Activated CD4-positive, alpha-beta T cell treated with anti-CD3 and anti-CD28 coated beads, Interleukin-2, amount 10 ng/mL, durations not matched to agents 7 days and 5 days (primary cell): ENCODE measurements at regions of chr16 and their contacts with region 1.

Region 1: GRCh38 chr16:71883849-71884638 is at the start of gene ZNF821:
- DNase-seq: peak; percentile 69
- H3K4me3 Mint-ChIP-seq: peak within 1 kb of the TSS; percentile 96
- H3K27ac Mint-ChIP-seq: peak within 1 kb of the TSS; percentile 95
- H3K4me1 Mint-ChIP-seq: peaks cover 51% of the 10 kb centered on the region
- H3K27me3 Mint-ChIP-seq: peaks cover 15% of the 10 kb centered on the region
- total RNA-seq, gene ZNF821: 7.1 to 7.7 TPM

Region 2: GRCh38 chr16:71855937-71856662 is 27.9 kb before region 1 on chr16:
- CTCF ChIA-PET with region 1: interaction called, 23 read pairs
- POLR2A ChIA-PET with region 1: no interaction called
- DNase-seq: no peak
- H3K4me3 Mint-ChIP-seq: no peak overlapping the region
- H3K27ac Mint-ChIP-seq: no peak overlapping the region
- H3K4me1 Mint-ChIP-seq: peaks cover 44% of the 10 kb centered on the region
- H3K27me3 Mint-ChIP-seq: no peaks in the 10 kb centered on the region

Region 3: DNA sequence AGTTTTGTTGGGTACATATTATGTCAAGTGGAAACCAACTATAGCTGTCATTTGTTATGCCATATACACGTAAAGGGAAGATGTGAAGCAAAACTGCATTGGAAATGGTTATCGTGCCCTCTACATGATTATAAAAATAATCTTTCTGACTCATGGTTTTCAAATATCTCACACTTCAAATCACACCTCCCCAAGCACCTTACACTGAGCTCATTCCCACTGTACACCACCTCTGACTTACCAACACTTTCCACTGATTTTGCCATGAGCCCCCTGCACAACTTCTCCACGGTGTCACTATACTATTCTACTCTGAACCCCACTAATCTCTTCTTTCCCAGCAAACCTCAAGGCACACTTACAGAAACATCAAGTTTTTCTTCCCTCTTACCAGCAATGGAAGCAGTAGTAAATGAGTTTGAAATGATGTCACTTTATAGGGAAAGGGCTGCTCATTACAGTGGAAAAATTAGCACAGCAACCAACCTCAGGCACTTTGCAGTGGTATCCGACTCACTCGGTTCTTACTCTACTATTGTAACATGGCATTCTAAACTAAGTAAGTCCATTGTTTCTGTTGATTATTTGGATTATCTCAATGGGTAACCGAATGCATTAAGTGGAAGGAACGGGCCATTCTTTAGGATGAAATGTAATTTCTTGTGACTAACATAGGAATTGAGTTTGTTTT is 18.7 kb before region 1 on chr16:
- CTCF ChIA-PET with region 1: interaction called, 16 read pairs
- POLR2A ChIA-PET with region 1: no interaction called
- DNase-seq: no peak
- H3K4me3 Mint-ChIP-seq: no peak overlapping the region
- H3K27ac Mint-ChIP-seq: no peak overlapping the region
- H3K4me1 Mint-ChIP-seq: peaks cover 4% of the 10 kb centered on the region
- H3K27me3 Mint-ChIP-seq: no peaks in the 10 kb centered on the region

Region 4: DNA sequence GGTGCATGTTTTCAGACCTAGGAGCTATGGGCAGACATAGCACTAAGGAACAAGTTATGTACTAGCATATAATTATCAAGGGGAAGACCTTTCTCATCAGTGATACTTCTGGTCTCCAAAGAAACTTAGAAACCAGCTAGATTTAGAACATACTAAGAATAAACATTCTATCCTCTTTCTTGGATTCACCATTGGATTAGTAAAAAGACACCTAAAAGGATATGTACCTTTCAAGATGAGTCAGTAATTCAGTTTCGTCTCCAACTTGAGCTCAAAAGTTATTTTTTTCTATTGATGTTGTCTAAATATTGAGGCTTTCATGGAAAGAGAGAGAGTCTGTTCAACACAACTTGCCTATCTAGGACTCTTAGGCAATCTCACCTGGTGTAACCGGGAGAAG is 13.2 kb before region 1 on chr16:
- CTCF ChIA-PET with region 1: interaction called, 31 read pairs
- POLR2A ChIA-PET with region 1: no interaction called
- DNase-seq: no peak
- H3K4me3 Mint-ChIP-seq: no peak overlapping the region
- H3K27ac Mint-ChIP-seq: no peak overlapping the region
- H3K4me1 Mint-ChIP-seq: peaks cover 23% of the 10 kb centered on the region
- H3K27me3 Mint-ChIP-seq: no peaks in the 10 kb centered on the region

Region 5: GRCh38 chr16:71894921-71895678 is 11.1 kb after region 1 on chr16 and contains the start of gene IST1:
- CTCF ChIA-PET with region 1: interaction called, 55 read pairs
- POLR2A ChIA-PET with region 1: no interaction called
- DNase-seq: peak; percentile 98
- H3K4me3 Mint-ChIP-seq: peak within 1 kb of the TSS; percentile 93
- H3K27ac Mint-ChIP-seq: peak within 1 kb of the TSS; percentile 95
- H3K4me1 Mint-ChIP-seq: peaks cover 30% of the 10 kb centered on the region
- H3K27me3 Mint-ChIP-seq: no peaks in the 10 kb centered on the region
- total RNA-seq, gene IST1: 180 to 191 TPM

Region 6: DNA sequence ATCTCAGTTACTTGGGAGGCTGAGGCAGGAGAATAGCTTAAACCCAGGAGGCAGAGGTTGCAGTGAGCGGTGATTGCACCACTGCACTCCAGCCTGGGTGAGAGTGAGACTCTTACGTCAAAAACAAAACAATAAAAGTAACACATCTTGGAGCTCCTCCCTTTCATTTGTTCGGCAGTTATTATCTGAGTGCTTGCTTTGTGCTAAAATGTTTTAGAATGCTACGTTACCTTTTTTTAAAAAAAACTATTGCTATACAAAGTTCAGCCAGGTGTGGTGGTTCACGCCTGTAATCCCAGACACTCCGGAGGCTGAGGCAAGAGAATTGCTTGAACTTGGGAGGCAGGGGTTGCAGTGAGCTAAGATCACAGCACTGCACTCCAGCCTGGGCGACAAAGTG is 27.1 kb after region 1 on chr16:
- CTCF ChIA-PET with region 1: interaction called, 12 read pairs
- POLR2A ChIA-PET with region 1: no interaction called
- DNase-seq: no peak
- H3K4me3 Mint-ChIP-seq: no peak overlapping the region
- H3K27ac Mint-ChIP-seq: no peak overlapping the region
- H3K4me1 Mint-ChIP-seq: peaks cover 44% of the 10 kb centered on the region
- H3K27me3 Mint-ChIP-seq: no peaks in the 10 kb centered on the region